Esophagus muscularis mucosa (tissue), 4 donors: ENCODE measurements at regions of chr18 and their contacts with region 1.

Region 1: GRCh38 chr18:74196220-74197119 is 48.1 kb downstream of the TIMM21 start:
- DNase-seq: no peak
- H3K4me3 ChIP-seq: peak overlapping the region in 2 of 4 donors; percentile 18 to 46
- H3K27ac ChIP-seq: no peak overlapping the region
- H3K4me1 ChIP-seq: peaks cover 0 to 6% (median 5%) of the 10 kb centered on the region in 4 donors
- H3K27me3 ChIP-seq: peaks cover 0 to 27% (median 0%) of the 10 kb centered on the region in 4 donors
- CTCF ChIP-seq: peak; percentile 88 to 92 (median 91)
- EP300 ChIP-seq: no peak
- POLR2A ChIP-seq: no peak

Region 2: DNA sequence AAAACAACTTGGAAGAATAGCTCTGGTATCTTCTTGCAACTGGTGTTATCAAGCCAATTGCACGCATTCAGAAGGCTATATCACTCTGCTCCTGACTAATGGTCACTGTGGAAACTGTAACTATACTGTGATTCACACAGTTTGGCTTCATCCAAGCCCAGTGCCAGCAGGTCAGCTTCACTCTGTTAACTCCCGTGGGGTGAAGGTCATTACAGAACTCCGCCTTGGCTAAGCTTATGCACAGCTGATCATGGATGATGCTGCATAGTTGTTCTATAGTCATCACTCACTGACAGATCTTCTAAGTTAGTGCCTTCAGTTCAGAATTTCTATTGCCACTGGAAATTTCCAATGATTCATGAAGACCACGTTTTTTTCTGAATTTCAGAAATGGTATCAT is 831.5 kb before region 1 on chr18:
- intact Hi-C with region 1: no loop called
- DNase-seq: no peak
- H3K4me3 ChIP-seq: no peak overlapping the region
- H3K27ac ChIP-seq: no peak overlapping the region
- H3K4me1 ChIP-seq: no peaks in the 10 kb centered on the region
- H3K27me3 ChIP-seq: no peaks in the 10 kb centered on the region
- CTCF ChIP-seq: no peak
- EP300 ChIP-seq: no peak
- POLR2A ChIP-seq: no peak

Region 3: DNA sequence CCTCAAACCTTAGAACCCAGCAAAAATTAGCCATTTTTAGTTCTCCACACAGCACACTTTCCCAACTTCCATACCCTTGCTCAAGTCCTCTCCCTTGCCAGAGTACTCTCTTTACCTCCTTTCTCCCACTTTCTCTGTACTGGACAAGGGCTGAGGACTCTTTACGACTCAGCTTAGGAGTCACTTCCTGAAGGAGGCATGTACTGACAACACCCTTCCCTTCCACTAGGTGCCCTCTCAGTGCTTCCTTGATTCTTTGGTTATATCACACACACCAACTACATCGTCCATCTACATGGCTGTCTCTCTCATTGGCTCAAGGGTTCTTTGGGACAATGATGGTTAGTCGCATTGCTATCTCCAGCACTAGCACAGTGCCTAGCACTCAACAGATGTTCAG is 113.9 kb after region 1 on chr18:
- intact Hi-C with region 1: no loop called
- DNase-seq: no peak
- H3K4me3 ChIP-seq: no peak overlapping the region
- H3K27ac ChIP-seq: no peak overlapping the region
- H3K4me1 ChIP-seq: peaks cover 0 to 10% (median 0%) of the 10 kb centered on the region in 4 donors
- H3K27me3 ChIP-seq: no peaks in the 10 kb centered on the region
- CTCF ChIP-seq: peak; percentile 8 to 40 (median 22)
- EP300 ChIP-seq: no peak
- POLR2A ChIP-seq: no peak

Region 4: GRCh38 chr18:74342416-74343043 is 146.1 kb after region 1 on chr18:
- intact Hi-C with region 1: loop called (anchors 2 kb)
- DNase-seq: no peak
- H3K4me3 ChIP-seq: no peak overlapping the region
- H3K27ac ChIP-seq: no peak overlapping the region
- H3K4me1 ChIP-seq: no peaks in the 10 kb centered on the region
- H3K27me3 ChIP-seq: no peaks in the 10 kb centered on the region
- CTCF ChIP-seq: peak; percentile 68 to 77 (median 69)
- EP300 ChIP-seq: no peak
- POLR2A ChIP-seq: no peak